ENCODE measurements at regions of chr6 and their contacts with region 1.

Region 1: GRCh38 chr6:104789770-104790190 is 69.9 kb downstream of the HACE1 start:
- DNase-seq: peak; percentile 18
- ATAC-seq: peak; percentile 71
- H3K4me3 ChIP-seq: no peak overlapping the region
- H3K27ac ChIP-seq: no peak overlapping the region
- H3K4me1 ChIP-seq: no peaks in the 10 kb centered on the region
- H3K27me3 ChIP-seq: no peaks in the 10 kb centered on the region
- CTCF ChIP-seq: peak; percentile 46
- EP300 ChIP-seq: no peak
- POLR2A ChIP-seq: no peak
- RAD21 ChIP-seq: no peak

Region 2: GRCh38 chr6:104859225-104860146 is 69.7 kb after region 1 on chr6 and contains the start of gene HACE1:
- CTCF ChIA-PET with region 1: no interaction called
- POLR2A ChIA-PET with region 1: no interaction called
- in situ Hi-C with region 1: no loop called
- intact Hi-C with region 1: loop called (anchors 2 kb)
- DNase-seq: peak; percentile 78
- ATAC-seq: peak; percentile 99
- H3K4me3 ChIP-seq: peak within 1 kb of the TSS; percentile 94 to 98 (median 95)
- H3K27ac ChIP-seq: peak within 1 kb of the TSS; percentile 61
- H3K4me1 ChIP-seq: peaks cover 18% of the 10 kb centered on the region
- H3K27me3 ChIP-seq: no peaks in the 10 kb centered on the region; a peak in 1 of 5 replicates
- CTCF ChIP-seq: peak; percentile 34; the same call in 1 of the 2 replicates
- EP300 ChIP-seq: no peak
- POLR2A ChIP-seq: peak; percentile 20 to 87; a peak in 2 of 4 replicates
- RAD21 ChIP-seq: peak; percentile 61
- total RNA-seq, gene HACE1: 11.4 and 16.0 TPM in 2 replicates